SK-N-SH (cell line): ENCODE measurements at regions of chr18 and their contacts with region 1.

Region 1: GRCh38 chr18:34352385-34353163 is 127.9 kb upstream of the NOL4 start:
- DNase-seq: peak; percentile 26
- H3K4me3 ChIP-seq: no peak overlapping the region
- H3K27ac ChIP-seq: no peak overlapping the region
- H3K4me1 ChIP-seq: no peaks in the 10 kb centered on the region; a peak in 1 of 4 replicates
- H3K27me3 ChIP-seq: no peaks in the 10 kb centered on the region
- CTCF ChIP-seq: peak; percentile 33
- EP300 ChIP-seq: no peak
- RAD21 ChIP-seq: peak; percentile 73

Region 2: DNA sequence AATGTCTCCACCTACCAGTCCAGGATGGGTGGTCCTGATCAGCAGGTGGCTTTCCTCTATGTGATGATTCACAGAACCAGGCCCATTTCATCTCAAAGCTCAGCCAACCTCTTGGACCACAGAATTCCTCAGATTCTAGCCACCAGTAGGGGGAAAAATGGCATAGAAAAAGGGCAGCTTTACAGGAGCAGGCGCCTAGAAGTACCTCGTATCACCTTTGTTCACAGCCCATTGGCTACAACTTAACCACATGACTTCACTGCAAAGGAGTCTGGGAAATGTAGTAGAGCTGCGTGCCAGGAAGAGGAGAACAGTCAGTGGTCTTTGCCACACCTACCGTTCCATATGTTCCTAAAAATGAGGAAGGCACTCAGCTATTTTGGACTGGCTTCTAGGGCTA is 294.7 kb after region 1 on chr18:
- CTCF ChIA-PET with region 1: interaction called, 27 read pairs
- POLR2A ChIA-PET with region 1: no interaction called
- DNase-seq: no peak
- H3K4me3 ChIP-seq: no peak overlapping the region
- H3K27ac ChIP-seq: no peak overlapping the region
- H3K4me1 ChIP-seq: peaks cover 0 to 5% of the 10 kb centered on the region in 2 experiments; a peak in 2 of 4 replicates
- H3K27me3 ChIP-seq: no peaks in the 10 kb centered on the region
- CTCF ChIP-seq: no peak
- EP300 ChIP-seq: no peak
- RAD21 ChIP-seq: no peak

Region 3: DNA sequence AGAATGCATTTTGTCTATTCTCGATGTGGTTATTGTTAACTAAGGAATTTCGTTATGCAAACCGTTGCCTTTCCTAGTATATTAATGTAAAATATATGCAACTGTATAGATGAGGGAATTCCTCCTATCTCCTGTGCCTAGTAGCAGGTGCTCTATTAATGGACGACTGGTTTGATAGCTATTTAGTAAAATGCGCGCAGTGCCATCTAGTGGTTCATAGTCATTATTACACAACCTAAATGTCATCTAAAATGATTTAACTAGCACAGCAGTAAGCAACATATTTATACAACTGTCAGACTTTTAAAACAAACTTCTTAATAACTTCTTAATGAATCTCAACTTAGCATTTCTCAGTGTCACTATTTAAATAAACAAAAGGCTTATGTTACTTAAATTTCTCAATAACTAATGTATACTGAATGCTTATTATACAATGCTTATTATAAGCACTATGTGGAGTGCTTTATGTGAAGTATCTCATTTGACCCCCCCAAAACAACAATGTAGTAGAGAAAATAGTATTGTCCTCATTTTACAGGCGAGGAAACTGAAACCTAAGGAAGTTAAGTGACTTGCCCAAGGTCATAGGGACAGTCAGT is 435.5 kb after region 1 on chr18:
- CTCF ChIA-PET with region 1: interaction called, 21 read pairs
- POLR2A ChIA-PET with region 1: no interaction called
- DNase-seq: peak; percentile 53
- H3K4me3 ChIP-seq: no peak overlapping the region; a peak in 1 of 4 replicates
- H3K27ac ChIP-seq: no peak overlapping the region
- H3K4me1 ChIP-seq: 0 out of 4 replicates have a peak, but pooled peaks cover 0 to 6% of the 10 kb centered on the region in 2 experiments
- H3K27me3 ChIP-seq: no peaks in the 10 kb centered on the region
- CTCF ChIP-seq: peak; percentile 84
- EP300 ChIP-seq: no peak
- RAD21 ChIP-seq: peak; percentile 94